ENCODE measurements at regions of chr17 and their contacts with region 1.

Region 1: GRCh38 chr17:69523244-69523861 is 108.9 kb downstream of the MAP2K6 start:
- DNase-seq: peak; percentile 64
- ATAC-seq: peak; percentile 75
- H3K4me3 ChIP-seq: no peak overlapping the region
- H3K27ac ChIP-seq: no peak overlapping the region
- H3K4me1 ChIP-seq: no peaks in the 10 kb centered on the region
- H3K27me3 ChIP-seq: no peaks in the 10 kb centered on the region
- CTCF ChIP-seq: peak; percentile 74
- POLR2A ChIP-seq: no peak
- RAD21 ChIP-seq: peak; percentile 68

Region 2: DNA sequence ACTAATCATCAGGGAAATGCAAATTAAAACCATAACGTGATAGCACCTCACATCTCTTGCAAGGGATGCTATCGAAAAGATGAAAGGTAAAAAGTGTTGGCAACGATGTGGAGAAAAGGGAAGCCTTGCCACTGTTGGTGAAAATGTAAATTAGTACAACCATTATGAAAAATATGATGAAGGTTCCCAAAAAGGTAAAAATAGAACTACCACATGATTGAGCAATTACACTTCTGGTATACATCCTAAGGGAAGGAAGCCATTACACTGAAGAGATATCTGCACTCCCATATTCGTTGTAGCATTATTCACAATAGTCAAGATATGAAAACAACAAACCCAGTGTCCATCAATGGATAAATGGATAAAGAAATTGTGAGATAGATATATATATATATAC is 316.2 kb before region 1 on chr17:
- CTCF ChIA-PET with region 1: no interaction called
- POLR2A ChIA-PET with region 1: no interaction called
- dilution Hi-C with region 1: no loop called
- in situ Hi-C with region 1: no loop called
- intact Hi-C with region 1: no loop called
- DNase-seq: no peak
- ATAC-seq: no peak
- H3K4me3 ChIP-seq: no peak overlapping the region
- H3K27ac ChIP-seq: no peak overlapping the region
- H3K4me1 ChIP-seq: no peaks in the 10 kb centered on the region
- H3K27me3 ChIP-seq: no peaks in the 10 kb centered on the region
- CTCF ChIP-seq: no peak
- POLR2A ChIP-seq: no peak
- RAD21 ChIP-seq: no peak

Region 3: GRCh38 chr17:69327060-69327831 is 196.1 kb before region 1 on chr17 and contains the start of gene ABCA5:
- CTCF ChIA-PET with region 1: interaction called, 3 read pairs
- POLR2A ChIA-PET with region 1: no interaction called
- dilution Hi-C with region 1: no loop called
- in situ Hi-C with region 1: loop called (anchors 5 kb)
- intact Hi-C with region 1: loop called (anchors 2 kb)
- DNase-seq: peak; percentile 79
- ATAC-seq: peak; percentile 94
- H3K4me3 ChIP-seq: peak within 1 kb of the TSS; percentile 57
- H3K27ac ChIP-seq: no peak within 1 kb of the TSS
- H3K4me1 ChIP-seq: no peaks in the 10 kb centered on the region; the same call in 1 of the 2 replicates
- H3K27me3 ChIP-seq: no peaks in the 10 kb centered on the region; the same call in none of the 2 replicates
- CTCF ChIP-seq: no peak
- POLR2A ChIP-seq: no peak
- RAD21 ChIP-seq: no peak
- total RNA-seq, gene ABCA5: 2.3 and 3.6 TPM in 2 replicates

Region 4: GRCh38 chr17:69485901-69486643 is 37.3 kb before region 1 on chr17:
- CTCF ChIA-PET with region 1: no interaction called
- POLR2A ChIA-PET with region 1: no interaction called
- dilution Hi-C with region 1: no loop called
- in situ Hi-C with region 1: no loop called
- intact Hi-C with region 1: no loop called
- DNase-seq: peak; percentile 59
- ATAC-seq: 0 out of 2 replicates have a peak, but pooled peaks have one; percentile 14
- H3K4me3 ChIP-seq: no peak overlapping the region
- H3K27ac ChIP-seq: no peak overlapping the region
- H3K4me1 ChIP-seq: no peaks in the 10 kb centered on the region
- H3K27me3 ChIP-seq: no peaks in the 10 kb centered on the region
- CTCF ChIP-seq: no peak
- POLR2A ChIP-seq: no peak
- RAD21 ChIP-seq: no peak

Region 5: GRCh38 chr17:69567130-69567529 is 43.8 kb after region 1 on chr17:
- CTCF ChIA-PET with region 1: no interaction called
- POLR2A ChIA-PET with region 1: no interaction called
- dilution Hi-C with region 1: no loop called
- in situ Hi-C with region 1: no loop called
- intact Hi-C with region 1: loop called (anchors 5 kb)
- DNase-seq: peak; percentile 31
- ATAC-seq: 0 out of 2 replicates have a peak, but pooled peaks have one; percentile 32
- H3K4me3 ChIP-seq: no peak overlapping the region
- H3K27ac ChIP-seq: no peak overlapping the region
- H3K4me1 ChIP-seq: no peaks in the 10 kb centered on the region; the same call in 1 of the 2 replicates
- H3K27me3 ChIP-seq: no peaks in the 10 kb centered on the region; the same call in 1 of the 2 replicates
- CTCF ChIP-seq: no peak
- POLR2A ChIP-seq: no peak
- RAD21 ChIP-seq: no peak

Region 6: GRCh38 chr17:70144260-70144846 is 621.0 kb after region 1 on chr17:
- CTCF ChIA-PET with region 1: interaction called, 3 read pairs
- POLR2A ChIA-PET with region 1: no interaction called
- dilution Hi-C with region 1: no loop called
- in situ Hi-C with region 1: no loop called
- intact Hi-C with region 1: loop called (anchors 2 kb)
- DNase-seq: peak; percentile 54
- ATAC-seq: peak; percentile 51
- H3K4me3 ChIP-seq: no peak overlapping the region
- H3K27ac ChIP-seq: no peak overlapping the region
- H3K4me1 ChIP-seq: no peaks in the 10 kb centered on the region
- H3K27me3 ChIP-seq: no peaks in the 10 kb centered on the region
- CTCF ChIP-seq: peak; percentile 70
- POLR2A ChIP-seq: no peak
- RAD21 ChIP-seq: peak; percentile 74

Region 7: GRCh38 chr17:70622368-70623260 is 1099.3 kb after region 1 on chr17:
- CTCF ChIA-PET with region 1: no interaction called
- POLR2A ChIA-PET with region 1: no interaction called
- dilution Hi-C with region 1: no loop called
- in situ Hi-C with region 1: no loop called
- intact Hi-C with region 1: loop called (anchors 1 kb)
- DNase-seq: peak; percentile 18
- ATAC-seq: peak; percentile 63
- H3K4me3 ChIP-seq: no peak overlapping the region
- H3K27ac ChIP-seq: no peak overlapping the region
- H3K4me1 ChIP-seq: no peaks in the 10 kb centered on the region
- H3K27me3 ChIP-seq: no peaks in the 10 kb centered on the region; the same call in none of the 2 replicates
- CTCF ChIP-seq: peak; percentile 36
- POLR2A ChIP-seq: no peak
- RAD21 ChIP-seq: peak; percentile 42; the same call in 1 of the 2 replicates